Activated CD4-positive, alpha-beta T cell treated with anti-CD3 and anti-CD28 coated beads for 36 hours (primary cell): ENCODE measurements at regions of chr1 and their contacts with region 1.

Region 1: DNA sequence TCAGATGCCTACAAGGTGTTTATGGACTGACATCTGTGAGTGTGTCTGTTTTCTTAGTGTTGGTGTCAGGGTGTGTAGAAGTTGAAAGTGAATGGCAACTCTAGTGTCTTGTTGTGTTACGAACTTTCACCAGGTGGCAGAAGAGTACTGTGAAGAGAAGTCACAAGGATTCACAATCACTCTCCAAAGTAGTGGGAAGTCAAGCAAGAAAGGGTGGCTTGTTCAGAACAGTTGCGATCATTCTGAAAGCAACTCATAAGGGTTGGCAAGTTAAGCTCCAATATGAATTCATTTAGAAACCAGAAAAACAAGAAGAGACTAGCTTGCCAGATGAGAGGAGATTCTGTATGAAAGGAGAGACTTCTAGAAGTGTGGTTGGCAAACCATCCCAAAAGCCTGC is 86.1 kb downstream of the FASLG start:
- DNase-seq: peak; percentile 44
- ATAC-seq: peak; percentile 90
- H3K4me3 Mint-ChIP-seq: no peak overlapping the region
- H3K27ac Mint-ChIP-seq: peak overlapping the region; percentile 7
- H3K4me1 Mint-ChIP-seq: peaks cover 32% of the 10 kb centered on the region
- H3K27me3 Mint-ChIP-seq: peaks cover 10% of the 10 kb centered on the region

Region 2: DNA sequence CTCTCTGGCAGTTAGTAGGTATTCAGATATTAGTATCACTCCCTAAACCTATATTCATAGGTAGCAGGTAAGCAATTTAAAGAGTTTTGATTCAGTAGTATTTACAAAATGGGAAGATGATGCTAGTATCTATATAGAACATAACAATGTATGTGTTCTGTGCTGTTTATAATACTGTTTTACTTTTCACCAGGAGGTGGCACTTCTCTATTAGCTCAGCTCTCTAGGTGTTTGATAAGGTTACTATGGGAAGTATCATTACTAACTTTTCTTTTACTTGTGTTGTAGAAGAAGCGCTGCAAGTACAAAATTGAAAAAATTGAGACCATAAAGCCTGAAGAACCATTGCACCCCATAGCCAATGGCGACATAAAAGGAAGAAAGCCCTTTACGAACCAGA is 135.5 kb before region 1 on chr1:
- CTCF ChIA-PET with region 1: interaction called, 12 read pairs
- POLR2A ChIA-PET with region 1: no interaction called
- intact Hi-C with region 1: no loop called
- DNase-seq: no peak
- ATAC-seq: no peak
- H3K4me3 Mint-ChIP-seq: no peak overlapping the region
- H3K27ac Mint-ChIP-seq: no peak overlapping the region
- H3K4me1 Mint-ChIP-seq: peaks cover 7% of the 10 kb centered on the region
- H3K27me3 Mint-ChIP-seq: no peaks in the 10 kb centered on the region

Region 3: GRCh38 chr1:172733815-172734214 is 11.2 kb before region 1 on chr1:
- CTCF ChIA-PET with region 1: interaction called, 39 read pairs
- POLR2A ChIA-PET with region 1: no interaction called
- intact Hi-C with region 1: no loop called
- DNase-seq: no peak
- ATAC-seq: no peak
- H3K4me3 Mint-ChIP-seq: no peak overlapping the region
- H3K27ac Mint-ChIP-seq: no peak overlapping the region
- H3K4me1 Mint-ChIP-seq: no peaks in the 10 kb centered on the region
- H3K27me3 Mint-ChIP-seq: peaks cover 4% of the 10 kb centered on the region

Region 4: DNA sequence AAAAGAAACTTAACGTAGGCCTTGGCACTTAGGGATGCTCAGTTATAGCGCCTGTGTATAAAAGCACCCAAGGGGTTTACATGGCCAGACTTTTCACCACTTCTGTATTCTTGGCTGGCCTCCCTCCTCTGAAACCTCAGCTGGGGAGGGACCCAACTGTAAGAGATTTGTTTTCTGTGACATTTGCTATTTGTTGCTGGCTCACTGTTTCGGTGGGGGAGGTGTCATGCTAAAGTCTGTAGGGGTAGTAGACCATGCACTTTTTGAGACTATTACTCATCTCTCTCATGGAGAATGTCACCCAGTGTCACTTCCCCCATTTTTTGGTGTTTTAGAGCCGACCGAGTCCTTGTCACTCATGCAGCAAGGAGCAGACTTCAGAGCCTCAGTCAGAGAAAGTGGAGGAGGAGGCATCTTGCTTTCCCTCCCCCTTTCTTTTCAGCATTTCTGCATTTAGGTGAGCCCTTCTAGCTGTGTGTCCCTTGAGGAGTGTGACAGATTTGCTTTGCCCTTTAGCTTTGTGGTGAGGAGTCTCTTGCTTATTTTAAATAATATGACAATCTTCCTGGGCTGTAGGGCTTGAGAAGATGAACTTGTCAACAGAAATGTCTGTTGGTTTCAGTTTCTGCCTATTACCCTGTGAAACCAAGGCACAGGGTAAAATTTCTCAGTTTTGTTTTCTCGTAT is 74.0 kb after region 1 on chr1:
- CTCF ChIA-PET with region 1: interaction called, 10 read pairs
- POLR2A ChIA-PET with region 1: no interaction called
- intact Hi-C with region 1: loop called (anchors 1 to 2 kb)
- DNase-seq: peak; percentile 70
- ATAC-seq: peak; percentile 96
- H3K4me3 Mint-ChIP-seq: peak overlapping the region; percentile 3
- H3K27ac Mint-ChIP-seq: peak overlapping the region; percentile 38
- H3K4me1 Mint-ChIP-seq: peaks cover 33% of the 10 kb centered on the region
- H3K27me3 Mint-ChIP-seq: peaks cover 15% of the 10 kb centered on the region

Region 5: DNA sequence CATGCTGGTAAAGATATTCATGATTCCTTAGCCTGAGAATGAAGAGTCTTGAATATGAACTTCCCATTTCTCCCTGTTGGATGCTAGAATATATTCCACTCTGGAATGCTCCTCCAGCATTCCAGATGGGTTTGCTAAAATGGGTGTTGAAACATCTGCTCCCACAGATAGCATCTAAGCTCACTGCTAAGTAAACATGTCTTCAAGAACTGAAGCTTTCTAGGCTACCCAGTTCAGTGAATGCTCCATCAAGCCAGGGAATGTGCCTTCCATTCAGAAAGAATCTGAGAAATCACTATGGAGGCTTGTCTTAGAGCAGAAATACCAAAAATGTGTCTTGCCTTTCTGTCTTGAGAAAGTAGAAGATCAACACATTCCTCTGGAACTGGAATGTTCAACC is 224.6 kb after region 1 on chr1:
- CTCF ChIA-PET with region 1: interaction called, 10 read pairs
- POLR2A ChIA-PET with region 1: no interaction called
- intact Hi-C with region 1: loop called (anchors 1 to 5 kb)
- DNase-seq: no peak
- ATAC-seq: no peak
- H3K4me3 Mint-ChIP-seq: no peak overlapping the region
- H3K27ac Mint-ChIP-seq: no peak overlapping the region
- H3K4me1 Mint-ChIP-seq: peaks cover 17% of the 10 kb centered on the region
- H3K27me3 Mint-ChIP-seq: no peaks in the 10 kb centered on the region

Region 6: DNA sequence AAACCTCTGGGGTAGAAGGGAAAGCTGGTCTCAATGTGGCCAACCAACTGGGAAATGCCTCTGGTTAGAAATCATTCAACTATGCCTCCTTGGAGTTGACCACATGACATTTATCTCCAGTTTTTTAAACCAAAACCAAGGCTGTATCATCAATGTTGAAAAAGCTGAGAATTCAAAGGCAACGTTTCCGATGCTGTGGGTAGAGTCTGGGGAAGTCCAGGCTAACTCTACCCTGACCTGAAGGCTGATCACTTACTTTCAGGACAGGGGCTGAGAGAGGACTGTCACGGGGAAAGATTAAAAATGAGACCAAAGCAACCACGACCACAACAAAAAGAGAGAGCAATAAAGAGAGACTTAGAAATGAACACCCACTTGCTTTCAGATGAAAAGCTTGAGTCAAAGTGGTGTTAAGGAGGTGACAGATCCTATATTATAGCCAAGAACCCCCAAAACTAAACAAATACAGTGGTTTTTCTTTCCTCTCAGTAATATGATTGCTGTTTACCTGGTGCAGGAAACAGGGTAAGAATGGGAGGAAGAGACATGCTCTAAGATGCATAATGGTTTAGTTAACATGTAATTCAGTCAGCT is 552.9 kb after region 1 on chr1:
- CTCF ChIA-PET with region 1: interaction called, 5 read pairs
- POLR2A ChIA-PET with region 1: no interaction called
- intact Hi-C with region 1: loop called in 1 of 2 experiments (anchors 2 kb)
- DNase-seq: peak; percentile 67
- ATAC-seq: peak; percentile 94
- H3K4me3 Mint-ChIP-seq: no peak overlapping the region
- H3K27ac Mint-ChIP-seq: no peak overlapping the region
- H3K4me1 Mint-ChIP-seq: peaks cover 27% of the 10 kb centered on the region
- H3K27me3 Mint-ChIP-seq: peaks cover 6% of the 10 kb centered on the region

Region 7: DNA sequence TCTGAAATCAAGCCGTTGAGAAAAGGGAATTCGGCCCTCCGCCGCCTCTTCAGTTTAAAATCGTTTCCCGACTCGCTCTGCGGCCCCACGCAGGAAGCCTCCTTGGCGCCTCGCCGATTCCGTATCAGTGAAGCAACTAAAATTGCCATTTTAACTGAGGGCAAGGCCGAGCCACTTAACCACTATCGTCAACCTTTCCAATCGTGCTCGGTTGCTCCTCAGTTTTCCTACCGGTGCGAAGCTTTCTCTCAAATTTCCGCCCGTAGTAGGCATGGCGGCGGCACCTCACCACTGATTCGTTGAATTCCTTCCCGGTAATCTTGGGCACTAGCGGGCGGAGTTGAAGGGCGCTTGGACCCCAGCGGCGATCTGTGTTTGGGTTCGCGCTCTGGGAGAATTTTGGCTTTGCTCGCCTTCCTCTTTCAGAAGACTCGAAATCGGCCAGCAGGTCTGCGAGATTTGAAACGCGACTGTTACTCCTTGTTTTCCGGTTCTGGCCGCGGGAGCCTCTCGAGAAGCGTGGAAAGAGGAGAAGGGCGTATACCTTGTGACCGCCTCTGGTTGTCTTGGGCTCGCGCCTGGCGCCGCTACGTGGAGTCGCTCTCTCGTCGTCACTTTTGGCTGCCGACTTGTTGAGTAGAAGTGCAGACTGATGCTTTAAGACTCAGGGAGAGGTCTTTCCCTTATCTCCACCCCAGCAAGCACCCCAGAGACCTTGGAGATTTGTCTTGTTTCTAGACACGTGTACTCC is 1079.5 kb after region 1 on chr1 and contains the starts of genes CENPL and DARS2:
- CTCF ChIA-PET with region 1: interaction called, 3 read pairs
- POLR2A ChIA-PET with region 1: no interaction called
- intact Hi-C with region 1: loop called (anchors 2 to 5 kb)
- DNase-seq: peak; percentile 94
- ATAC-seq: peak; percentile 86
- H3K4me3 Mint-ChIP-seq: peak within 1 kb of the TSS; percentile 94
- H3K27ac Mint-ChIP-seq: peak within 1 kb of the TSS; percentile 99
- H3K4me1 Mint-ChIP-seq: peaks cover 55% of the 10 kb centered on the region
- H3K27me3 Mint-ChIP-seq: no peaks in the 10 kb centered on the region
- total RNA-seq, gene CENPL: 26.1 to 27.2 TPM
- total RNA-seq, gene DARS2: 57.2 to 62.0 TPM